Kidney (tissue), 22 donors: ENCODE measurements at regions of chr13 and their contacts with region 1.

Region 1: GRCh38 chr13:69545551-69545950 is 562.1 kb upstream of the ATXN8OS start:
- DNase-seq: peak in 2 of 5 donors; percentile 15 to 26
- H3K4me3 ChIP-seq: no peak overlapping the region
- H3K27ac ChIP-seq: no peak overlapping the region
- H3K4me1 ChIP-seq: no peaks in the 10 kb centered on the region
- H3K27me3 ChIP-seq: no peaks in the 10 kb centered on the region
- CTCF ChIP-seq: no peak

Region 2: DNA sequence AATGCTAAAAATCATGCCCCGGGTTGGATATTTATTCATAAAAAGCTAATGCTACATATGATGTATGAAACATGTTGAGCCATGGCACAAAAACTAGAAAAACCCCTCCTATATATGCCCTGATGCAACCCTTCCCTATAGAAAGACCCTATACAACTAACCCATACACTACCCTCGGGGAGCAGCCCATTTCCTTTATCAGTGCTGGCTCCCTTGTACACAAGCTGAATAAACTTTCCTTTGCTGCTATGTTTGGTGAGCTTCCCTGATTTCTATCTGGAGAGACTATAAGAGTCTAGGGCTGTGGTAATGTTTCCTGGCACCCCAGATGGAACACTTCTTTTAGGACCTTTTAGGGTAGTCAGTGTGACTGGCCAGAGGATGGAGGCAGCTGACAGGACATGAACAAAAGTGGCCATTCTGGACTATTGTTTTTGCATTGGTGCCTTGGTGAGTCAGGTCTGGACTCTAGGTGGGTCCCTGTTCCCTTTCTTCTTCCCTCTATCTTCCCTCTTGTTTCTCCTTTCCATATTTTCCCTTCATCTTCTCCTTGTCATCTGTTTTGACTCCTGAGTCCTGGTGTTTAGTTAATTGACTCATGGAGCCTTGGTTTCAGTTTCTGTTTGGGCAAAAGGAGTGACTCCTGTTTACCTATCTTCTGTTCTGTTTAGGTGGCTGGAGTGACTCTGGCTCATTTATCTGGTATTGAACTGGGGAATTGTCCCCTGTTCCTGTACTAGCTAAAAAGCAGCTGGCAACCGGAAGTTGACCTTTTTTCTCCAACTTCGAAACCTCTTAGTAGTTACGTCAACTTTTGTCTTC is 993.6 kb before region 1 on chr13:
- intact Hi-C with region 1: loop called (anchors 10 kb)
- DNase-seq: no peak
- H3K4me3 ChIP-seq: peak overlapping the region in 1 of 3 donors; percentile 15
- H3K27ac ChIP-seq: no peak overlapping the region
- H3K4me1 ChIP-seq: no peaks in the 10 kb centered on the region
- H3K27me3 ChIP-seq: no peaks in the 10 kb centered on the region
- CTCF ChIP-seq: no peak